Posterior vena cava (tissue), 2 donors: ENCODE measurements at regions of chr15 and their contacts with region 1.

Region 1: DNA sequence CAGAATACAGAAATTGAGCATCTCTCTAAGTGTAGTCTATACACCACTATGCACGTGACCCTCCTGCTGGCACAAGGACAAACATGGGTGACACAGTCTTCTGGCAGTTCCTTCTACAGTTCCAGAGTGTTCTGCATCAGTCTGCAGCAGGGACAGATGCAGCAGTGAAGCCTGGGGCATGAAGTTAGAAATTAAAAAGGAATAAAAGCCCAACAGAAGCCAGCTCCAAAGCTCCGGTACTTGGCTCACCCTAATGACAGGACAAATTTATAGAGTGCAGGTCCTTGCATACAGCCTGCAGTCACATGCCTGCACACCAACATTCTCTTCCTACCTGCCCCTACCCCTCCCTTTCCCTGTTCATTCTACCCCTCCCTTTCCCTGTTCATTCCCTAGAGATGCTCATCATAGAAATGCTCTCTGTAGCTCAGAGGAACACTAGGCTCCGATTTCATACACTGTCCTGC is 15.0 kb downstream of the UACA start:
- DNase-seq: no peak

Region 2: DNA sequence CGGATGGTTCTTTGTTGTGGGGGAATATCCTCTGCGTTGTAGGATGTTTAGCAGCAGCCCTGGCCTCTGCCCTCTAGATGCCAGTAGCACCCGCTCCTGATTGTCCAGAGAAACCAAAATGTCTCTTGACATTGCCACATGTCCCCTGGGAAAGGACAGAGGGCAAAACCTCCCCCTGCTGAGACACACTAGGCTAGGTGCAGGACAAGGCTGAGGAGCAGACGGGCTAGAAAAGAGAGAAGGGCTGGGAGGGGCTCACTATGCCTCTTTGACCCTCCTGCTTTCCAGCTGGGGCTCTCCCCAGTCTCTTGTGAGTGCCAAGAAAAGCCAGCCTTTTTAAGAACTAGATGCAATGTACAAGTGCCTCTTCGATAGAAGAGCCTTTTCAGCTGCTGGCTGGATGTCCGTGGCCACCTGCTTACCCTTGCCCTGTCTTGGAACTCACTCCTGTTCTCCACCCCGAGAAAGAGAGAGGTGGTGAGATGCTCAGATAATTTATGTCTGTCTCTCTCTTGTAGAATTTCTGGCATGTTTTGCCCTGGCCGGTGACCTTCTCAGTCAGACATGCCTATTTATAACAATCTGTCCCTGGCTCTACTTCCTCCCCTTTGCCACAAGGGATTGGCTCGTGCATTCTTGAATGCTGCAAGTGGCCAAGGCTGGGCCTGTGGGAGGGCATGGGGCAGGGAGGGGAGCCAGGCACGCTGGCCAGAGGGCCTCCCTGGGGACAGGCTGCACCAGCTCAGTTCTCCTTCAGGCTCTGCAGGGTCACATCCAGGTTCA is 1153.1 kb before region 1 on chr15:
- intact Hi-C with region 1: no loop called
- DNase-seq: peak; percentile 82

Region 3: DNA sequence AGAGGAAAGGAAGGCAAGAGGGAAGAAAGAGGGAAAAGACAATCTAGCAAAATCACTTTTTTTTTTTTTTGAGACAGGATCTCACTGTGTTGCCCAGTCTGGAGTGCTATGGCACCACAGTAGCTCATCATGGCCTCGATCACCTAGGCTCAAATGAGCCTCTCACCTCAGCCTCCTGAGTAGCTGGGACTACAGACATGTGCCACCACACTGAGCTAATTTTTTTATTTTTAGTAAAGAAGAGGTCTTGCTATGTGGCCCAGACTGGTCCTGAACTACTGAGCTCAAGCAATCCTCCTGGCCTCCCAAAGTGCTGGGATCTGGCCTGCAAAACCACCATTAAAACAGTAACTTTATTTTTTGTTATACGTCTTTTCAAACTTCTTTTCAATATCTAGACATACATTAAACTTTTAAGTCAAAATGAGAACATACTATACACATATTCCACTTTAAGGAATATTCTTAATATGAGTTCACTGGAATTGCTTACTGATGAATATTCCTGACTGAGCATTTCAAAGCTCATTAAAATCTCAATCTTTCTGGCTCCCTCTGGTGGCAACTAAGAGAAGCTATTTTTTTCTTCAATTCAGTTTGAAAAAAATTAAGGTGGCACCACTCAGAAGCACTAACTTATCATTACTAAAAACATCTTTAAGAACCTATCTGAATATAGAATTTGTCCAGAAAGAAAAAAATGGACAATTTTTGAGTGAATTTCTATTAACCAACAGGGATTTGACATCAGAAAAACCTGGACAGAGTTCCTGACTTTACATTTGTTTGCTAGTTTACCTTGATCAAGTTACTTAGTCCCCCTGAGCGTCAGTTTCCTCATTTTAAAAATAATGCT is 25.8 kb before region 1 on chr15:
- intact Hi-C with region 1: no loop called
- DNase-seq: no peak

Region 4: DNA sequence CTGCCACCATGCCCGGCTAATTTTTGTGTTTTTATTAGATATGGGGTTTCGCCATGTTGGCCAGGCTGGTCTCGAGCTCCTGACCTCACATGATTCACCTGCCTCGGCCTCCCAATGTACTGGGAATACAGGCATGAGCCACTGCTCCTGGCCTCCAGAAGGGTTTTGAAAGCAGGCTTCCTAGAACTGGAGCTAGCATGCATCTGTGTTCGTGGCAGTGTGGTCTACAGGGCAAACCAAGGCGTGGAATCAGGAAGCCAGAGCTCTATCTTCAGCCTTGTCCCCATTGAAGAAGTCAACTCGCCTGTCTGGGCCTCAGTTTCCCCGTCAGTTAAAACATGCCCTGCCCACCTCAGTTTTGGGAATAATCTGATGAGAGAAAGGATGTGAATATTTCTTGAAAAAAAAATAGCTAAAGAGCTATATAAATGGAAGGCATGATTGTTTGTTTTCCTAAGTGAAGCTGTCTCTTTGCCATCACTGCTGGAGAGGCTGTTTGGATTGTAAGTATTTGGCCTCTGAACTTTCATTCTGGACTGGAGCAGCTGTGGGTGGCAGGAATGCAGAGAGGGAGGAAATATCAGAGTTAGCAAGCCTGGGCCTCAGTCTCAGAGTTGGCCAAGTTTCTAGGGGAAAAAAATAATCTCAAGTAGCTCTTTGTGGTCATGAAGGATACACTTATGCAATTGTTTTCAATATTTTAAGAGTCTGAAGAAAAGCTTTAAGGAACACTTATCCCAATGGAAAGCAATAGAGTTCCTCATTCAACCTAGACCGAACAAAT is 51.5 kb after region 1 on chr15:
- intact Hi-C with region 1: loop called in 1 of 2 experiments (anchors 1 kb)
- DNase-seq: no peak

Region 5: DNA sequence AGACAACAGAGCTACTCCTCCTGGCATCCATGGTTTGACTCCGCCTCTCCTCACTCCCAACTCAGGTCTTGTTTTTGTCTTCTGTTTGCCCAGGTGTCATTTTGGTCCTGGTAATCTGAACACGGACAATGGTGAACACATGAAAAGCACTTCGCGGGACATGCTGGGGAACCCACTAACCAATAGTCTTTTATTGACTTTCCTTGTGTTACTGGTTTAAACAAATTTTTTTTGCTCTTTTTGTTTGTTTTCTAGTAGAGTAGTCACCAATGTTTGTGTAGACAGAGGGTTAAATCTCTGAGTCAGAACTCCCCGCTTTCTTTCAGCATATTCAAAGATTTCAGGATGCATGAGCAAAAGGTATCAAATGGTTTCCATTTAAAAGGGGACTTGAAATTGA is 67.3 kb after region 1 on chr15:
- intact Hi-C with region 1: loop called in 1 of 2 experiments (anchors 10 kb)
- DNase-seq: no peak